K562 (cell line): ENCODE measurements at regions of chr22 and their contacts with region 1.

Region 1: GRCh38 chr22:22959147-22959827 is 71.7 kb downstream of the IGLL5 start:
- DNase-seq: peak; percentile 98 to 99 (median 99)
- ATAC-seq: peak; percentile 85
- H3K4me3 ChIP-seq: no peak overlapping the region
- H3K27ac ChIP-seq: no peak overlapping the region
- H3K4me1 ChIP-seq: no peaks in the 10 kb centered on the region
- H3K27me3 ChIP-seq: peaks cover 3 to 6% of the 10 kb centered on the region in 2 experiments; a peak in 3 of 5 replicates
- CTCF ChIP-seq: no peak
- EP300 ChIP-seq: no peak
- POLR2A ChIP-seq: no peak
- RAD21 ChIP-seq: no peak

Region 2: DNA sequence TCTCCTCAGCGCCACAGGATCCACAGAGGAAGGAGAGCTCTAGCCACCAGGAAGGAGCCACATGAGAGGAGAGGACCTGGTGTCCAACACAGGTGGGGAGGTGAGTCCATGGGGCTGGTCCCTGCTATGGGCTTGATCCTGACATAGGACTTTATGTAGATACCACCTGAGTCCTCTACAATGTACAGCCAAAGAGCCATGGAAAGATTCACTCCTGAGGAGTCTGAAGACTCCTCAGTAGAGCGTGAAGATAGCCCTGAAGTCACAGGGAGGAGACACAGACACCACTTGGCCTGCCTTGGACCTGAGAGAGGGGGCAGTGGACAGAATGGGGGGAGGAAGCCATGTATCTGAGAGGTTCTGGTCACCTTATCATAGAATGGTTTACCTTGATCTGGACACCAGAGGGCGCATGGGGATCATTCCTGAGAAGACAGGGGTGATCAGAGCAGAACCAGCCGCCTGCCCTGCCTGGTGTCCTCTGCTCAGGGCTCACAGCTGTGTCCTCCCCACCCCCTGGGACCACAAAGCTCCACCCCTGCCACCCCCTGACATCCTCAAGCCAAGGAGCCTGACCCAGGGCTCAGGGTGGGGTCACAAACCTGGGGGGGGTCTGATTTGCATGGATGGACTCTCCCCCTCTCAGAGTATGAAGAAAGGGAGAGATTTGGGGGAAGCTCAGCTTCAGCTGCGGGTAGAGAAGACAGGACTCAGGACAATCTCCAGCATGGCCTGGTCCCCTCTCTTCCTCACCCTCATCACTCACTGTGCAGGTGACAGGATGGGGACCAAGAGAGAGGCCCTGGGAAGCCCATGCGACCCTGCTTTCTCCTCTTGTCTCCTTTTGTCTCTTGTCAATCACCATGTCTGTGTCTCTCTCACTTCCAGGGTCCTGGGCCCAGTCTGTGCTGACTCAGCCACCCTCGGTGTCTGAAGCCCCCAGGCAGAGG is 527.7 kb before region 1 on chr22:
- CTCF ChIA-PET with region 1: interaction called, 21 read pairs
- POLR2A ChIA-PET with region 1: no interaction called
- in situ Hi-C with region 1: no loop called
- intact Hi-C with region 1: loop called (anchors 5 kb)
- DNase-seq: peak; percentile 95 to 99 (median 98)
- ATAC-seq: peak; percentile 98
- H3K4me3 ChIP-seq: no peak overlapping the region
- H3K27ac ChIP-seq: no peak overlapping the region
- H3K4me1 ChIP-seq: no peaks in the 10 kb centered on the region
- H3K27me3 ChIP-seq: peaks cover 18 to 32% of the 10 kb centered on the region in 2 experiments; a peak in 4 of 5 replicates
- CTCF ChIP-seq: peak; percentile 97 to 100 (median 99)
- EP300 ChIP-seq: no peak
- POLR2A ChIP-seq: no peak
- RAD21 ChIP-seq: peak; percentile 92 to 99

Region 3: DNA sequence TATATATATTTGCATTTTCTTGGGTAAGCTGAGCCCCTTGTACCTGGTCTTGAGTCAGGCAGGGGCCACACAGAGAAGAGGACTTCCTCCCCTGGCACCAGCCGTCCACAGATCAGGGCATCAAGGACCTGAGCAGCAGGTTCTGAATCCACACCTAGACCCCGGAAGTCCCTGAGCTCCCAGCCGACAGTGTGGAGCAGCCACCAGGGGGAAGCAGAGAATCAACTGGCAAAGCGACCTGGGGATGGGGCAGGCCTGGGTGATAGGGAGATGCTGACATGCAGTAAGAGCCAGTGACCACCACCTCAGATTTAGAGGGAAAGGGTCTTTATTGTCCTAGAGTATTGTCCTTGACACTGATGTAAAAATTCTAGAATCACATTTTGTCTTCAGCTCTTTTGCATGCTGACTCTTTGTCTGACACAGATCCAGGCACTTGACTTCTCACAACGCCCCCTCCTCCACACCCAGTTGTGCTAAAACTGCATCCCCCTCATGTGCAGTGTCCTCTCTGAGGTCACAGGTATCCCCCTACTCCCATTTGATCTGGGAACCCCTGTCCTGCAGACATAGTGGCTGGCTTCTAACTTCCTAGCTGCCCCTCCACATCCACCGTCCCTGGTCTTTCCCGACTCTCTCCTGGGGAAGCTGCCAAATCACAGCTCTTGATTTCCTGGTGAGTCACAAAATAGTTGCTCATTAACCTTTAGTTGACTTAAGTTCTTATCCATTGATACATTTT is 205.6 kb before region 1 on chr22:
- CTCF ChIA-PET with region 1: interaction called, 54 read pairs
- POLR2A ChIA-PET with region 1: interaction called, 5 read pairs
- in situ Hi-C with region 1: no loop called
- intact Hi-C with region 1: loop called (anchors 1 kb)
- DNase-seq: peak; percentile 96 to 100 (median 100)
- ATAC-seq: peak; percentile 97
- H3K4me3 ChIP-seq: no peak overlapping the region
- H3K27ac ChIP-seq: no peak overlapping the region
- H3K4me1 ChIP-seq: no peaks in the 10 kb centered on the region
- H3K27me3 ChIP-seq: peaks cover 2 to 20% of the 10 kb centered on the region in 2 experiments; a peak in 3 of 5 replicates
- CTCF ChIP-seq: peak in 1 of 3 experiments; percentile 100; a peak in 2 of 6 replicates
- EP300 ChIP-seq: no peak; the same call in 1 of the 2 replicates
- POLR2A ChIP-seq: no peak
- RAD21 ChIP-seq: peak in 1 of 2 experiments; percentile 98; a peak in 2 of 4 replicates

Region 4: GRCh38 chr22:22848364-22848866 is 110.9 kb before region 1 on chr22:
- CTCF ChIA-PET with region 1: interaction called, 83 read pairs
- POLR2A ChIA-PET with region 1: interaction called, 5 read pairs
- in situ Hi-C with region 1: no loop called
- intact Hi-C with region 1: loop called (anchors 1 kb)
- DNase-seq: peak; percentile 94 to 100 (median 98)
- ATAC-seq: peak; percentile 98
- H3K4me3 ChIP-seq: no peak overlapping the region
- H3K27ac ChIP-seq: no peak overlapping the region
- H3K4me1 ChIP-seq: no peaks in the 10 kb centered on the region
- H3K27me3 ChIP-seq: peaks cover 0 to 8% of the 10 kb centered on the region in 2 experiments; a peak in 1 of 5 replicates
- CTCF ChIP-seq: no peak
- EP300 ChIP-seq: no peak
- POLR2A ChIP-seq: no peak
- RAD21 ChIP-seq: no peak

Region 5: DNA sequence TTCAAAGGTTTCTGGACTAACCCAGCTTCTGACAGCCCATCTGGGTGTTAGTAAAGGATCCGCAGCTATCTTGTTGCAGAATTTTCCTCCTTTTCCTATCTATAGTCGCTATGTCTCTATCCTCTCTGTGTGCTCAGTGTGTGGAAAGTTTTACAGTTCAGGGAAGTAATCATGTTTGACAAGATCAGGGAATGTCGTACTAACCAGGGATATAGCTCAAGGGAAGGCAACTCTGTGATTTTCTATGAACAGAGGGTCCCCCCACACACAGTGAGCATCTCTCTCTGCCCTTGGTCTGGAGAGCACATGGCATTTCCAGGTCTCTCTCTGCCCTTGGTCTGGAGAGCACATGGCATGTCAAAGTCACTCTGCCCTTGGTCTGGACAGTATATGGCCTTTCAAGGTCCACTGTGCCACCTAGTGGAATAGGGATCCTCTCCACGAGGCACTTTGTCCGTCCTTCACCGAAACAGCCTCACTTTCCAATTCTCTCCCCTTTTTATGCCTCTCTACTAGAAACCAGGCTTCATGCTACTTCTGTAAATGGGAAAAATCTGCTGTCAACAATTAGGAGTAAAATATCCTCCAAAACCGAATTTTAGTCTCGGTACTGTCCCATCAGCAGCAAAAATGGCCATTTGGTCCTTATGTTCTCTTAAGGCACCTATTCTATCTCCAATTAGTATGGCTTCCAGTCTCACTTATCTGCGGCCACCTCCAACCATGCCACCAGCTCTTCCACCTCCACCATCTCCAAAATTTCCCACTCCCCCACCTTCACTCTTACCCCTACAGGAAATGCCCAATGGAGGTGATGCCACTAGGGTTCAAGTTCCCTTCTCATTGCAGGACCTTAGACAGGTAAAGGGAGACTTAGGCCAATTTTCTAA is 17.0 kb after region 1 on chr22:
- CTCF ChIA-PET with region 1: interaction called, 8 read pairs
- POLR2A ChIA-PET with region 1: interaction called, 27 read pairs
- in situ Hi-C with region 1: no loop called
- intact Hi-C with region 1: no loop called
- DNase-seq: peak in 3 of 4 experiments; percentile 40 to 69 (median 61)
- ATAC-seq: peak; percentile 86
- H3K4me3 ChIP-seq: no peak overlapping the region
- H3K27ac ChIP-seq: no peak overlapping the region
- H3K4me1 ChIP-seq: no peaks in the 10 kb centered on the region
- H3K27me3 ChIP-seq: peaks cover 0 to 4% of the 10 kb centered on the region in 2 experiments; a peak in 1 of 5 replicates
- CTCF ChIP-seq: no peak
- EP300 ChIP-seq: no peak
- POLR2A ChIP-seq: no peak
- RAD21 ChIP-seq: no peak

Region 6: GRCh38 chr22:23281406-23282088 is 322.3 kb after region 1 on chr22:
- CTCF ChIA-PET with region 1: interaction called, 265 read pairs
- POLR2A ChIA-PET with region 1: interaction called, 10 read pairs
- in situ Hi-C with region 1: loop called (anchors 5 kb)
- intact Hi-C with region 1: loop called (anchors 1 kb)
- DNase-seq: peak; percentile 99 to 100 (median 100)
- ATAC-seq: peak; percentile 95
- H3K4me3 ChIP-seq: no peak overlapping the region
- H3K27ac ChIP-seq: no peak overlapping the region
- H3K4me1 ChIP-seq: peaks cover 0 to 27% of the 10 kb centered on the region in 2 experiments; a peak in 2 of 5 replicates
- H3K27me3 ChIP-seq: no peaks in the 10 kb centered on the region
- CTCF ChIP-seq: peak in 2 of 3 experiments; percentile 99 to 100; a peak in 4 of 6 replicates
- EP300 ChIP-seq: no peak
- POLR2A ChIP-seq: no peak
- RAD21 ChIP-seq: peak in 1 of 2 experiments; percentile 100; a peak in 2 of 4 replicates

Region 7: DNA sequence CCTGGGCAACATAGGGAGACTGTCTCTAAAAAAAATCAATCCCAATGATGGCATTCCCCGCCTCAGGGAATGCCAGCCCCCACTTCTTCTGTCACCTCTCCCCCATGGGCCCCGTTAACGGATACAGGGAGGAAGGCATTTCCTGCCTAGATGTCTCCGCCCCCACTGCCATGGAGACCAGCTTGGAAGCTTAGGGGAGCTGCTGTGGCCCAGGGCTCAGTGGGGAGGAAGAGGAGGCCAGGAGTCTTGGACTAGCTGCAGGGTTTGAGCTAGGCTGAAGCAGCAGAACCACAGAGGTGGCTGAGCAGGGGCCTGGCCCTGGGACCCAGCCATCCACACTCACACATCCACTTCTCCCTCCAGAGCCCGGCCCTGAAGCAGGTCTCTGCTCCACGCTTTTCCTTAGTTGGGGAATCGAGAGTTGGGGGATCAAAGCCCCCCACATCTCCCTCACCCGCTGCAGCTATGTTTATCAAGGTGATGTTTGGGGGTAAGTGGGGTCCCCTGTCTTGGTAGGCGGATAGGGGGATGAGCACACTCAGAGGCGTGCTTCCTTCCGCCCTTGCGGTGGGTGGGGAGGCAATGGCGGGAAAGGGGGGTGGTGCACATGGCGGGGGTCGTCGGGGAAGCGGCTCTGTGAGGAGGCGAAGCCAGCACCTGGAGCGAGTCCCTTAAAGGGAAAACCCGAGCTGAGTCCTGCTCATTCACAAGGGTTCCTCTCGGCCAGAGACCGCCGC is 803.7 kb after region 1 on chr22 and contains the start of gene C22orf15:
- CTCF ChIA-PET with region 1: no interaction called
- POLR2A ChIA-PET with region 1: no interaction called
- in situ Hi-C with region 1: no loop called
- intact Hi-C with region 1: no loop called
- DNase-seq: peak in 2 of 4 experiments; percentile 30 to 47
- ATAC-seq: peak; percentile 10
- H3K4me3 ChIP-seq: no peak within 1 kb of the TSS
- H3K27ac ChIP-seq: no peak within 1 kb of the TSS
- H3K4me1 ChIP-seq: peaks cover 26 to 44% of the 10 kb centered on the region in 2 experiments; a peak in 4 of 5 replicates
- H3K27me3 ChIP-seq: no peaks in the 10 kb centered on the region
- CTCF ChIP-seq: no peak
- EP300 ChIP-seq: no peak
- POLR2A ChIP-seq: peak; percentile 33
- RAD21 ChIP-seq: no peak
- polyA plus RNA-seq, gene C22orf15: not detected